Activated CD4-positive, alpha-beta T cell treated with anti-CD3 and anti-CD28 coated beads, Interleukin-2, amount 10 ng/mL, durations not matched to agents 7 days and 5 days (primary cell): ENCODE measurements at regions of chr7 and their contacts with region 1.

Region 1: GRCh38 chr7:26187380-26188205 is 13.0 kb downstream of the HNRNPA2B1 start:
- DNase-seq: no peak
- H3K4me3 Mint-ChIP-seq: no peak overlapping the region
- H3K27ac Mint-ChIP-seq: peak overlapping the region; percentile 41
- H3K4me1 Mint-ChIP-seq: peaks cover 72% of the 10 kb centered on the region
- H3K27me3 Mint-ChIP-seq: no peaks in the 10 kb centered on the region

Region 2: GRCh38 chr7:26200444-26201246 is 13.1 kb after region 1 on chr7 and contains the start of gene HNRNPA2B1:
- CTCF ChIA-PET with region 1: interaction called, 28 read pairs
- POLR2A ChIA-PET with region 1: interaction called, 9 read pairs
- DNase-seq: peak; percentile 98
- H3K4me3 Mint-ChIP-seq: peak within 1 kb of the TSS; percentile 97
- H3K27ac Mint-ChIP-seq: peak within 1 kb of the TSS; percentile 100
- H3K4me1 Mint-ChIP-seq: peaks cover 44% of the 10 kb centered on the region
- H3K27me3 Mint-ChIP-seq: no peaks in the 10 kb centered on the region
- total RNA-seq, gene HNRNPA2B1: 649 to 781 TPM

Region 3: DNA sequence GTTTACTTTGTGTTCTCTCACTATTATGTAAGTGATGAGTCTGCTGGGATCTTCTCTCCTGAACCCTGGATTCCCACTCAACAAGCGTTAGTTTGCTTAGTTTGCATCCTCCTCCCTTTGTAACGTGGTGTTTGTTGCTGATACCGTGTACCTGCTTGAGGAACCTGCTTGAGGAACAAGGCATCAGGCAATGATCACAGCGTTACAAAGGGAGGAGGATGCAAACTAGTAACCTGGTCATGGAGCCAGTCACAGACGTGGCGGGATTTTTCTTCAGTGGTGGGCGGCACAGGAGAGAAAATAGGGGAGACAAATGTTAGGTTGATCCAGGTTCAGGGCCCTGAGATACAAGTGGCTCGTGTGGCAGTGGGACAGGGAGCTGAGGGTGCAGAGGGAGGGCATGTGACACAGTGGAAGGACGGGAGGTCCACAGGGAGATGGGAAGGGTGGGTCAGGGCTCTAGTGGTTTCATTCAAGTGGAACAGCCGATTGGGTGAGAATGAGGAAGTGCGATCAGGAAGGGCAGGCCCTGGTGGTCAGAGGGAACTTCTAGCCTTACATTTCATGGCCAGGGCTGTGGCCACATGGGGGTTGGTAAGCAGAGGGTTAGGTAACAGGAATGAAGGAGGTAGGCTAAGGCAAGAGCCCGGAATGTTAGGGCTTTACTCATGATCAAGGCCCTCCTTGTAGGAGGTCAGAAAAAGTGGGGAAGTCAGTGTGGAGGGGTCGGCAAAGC is 142.1 kb after region 1 on chr7:
- CTCF ChIA-PET with region 1: no interaction called
- POLR2A ChIA-PET with region 1: no interaction called
- DNase-seq: no peak
- H3K4me3 Mint-ChIP-seq: no peak overlapping the region
- H3K27ac Mint-ChIP-seq: no peak overlapping the region
- H3K4me1 Mint-ChIP-seq: peaks cover 22% of the 10 kb centered on the region
- H3K27me3 Mint-ChIP-seq: no peaks in the 10 kb centered on the region